ENCODE measurements at regions of chr12 and their contacts with region 1.

Region 1: GRCh38 chr12:94049718-94050117 is 98.7 kb upstream of the PLXNC1 start:
- DNase-seq: no peak
- H3K4me3 ChIP-seq: no peak overlapping the region
- H3K27ac ChIP-seq: no peak overlapping the region
- H3K4me1 ChIP-seq: no peaks in the 10 kb centered on the region
- CTCF ChIP-seq: no peak

Region 2: GRCh38 chr12:93938931-93939330 is 110.8 kb before region 1 on chr12:
- CTCF ChIA-PET with region 1: no interaction called
- POLR2A ChIA-PET with region 1: interaction called, 12 read pairs
- intact Hi-C with region 1: no loop called
- DNase-seq: no peak
- H3K4me3 ChIP-seq: no peak overlapping the region
- H3K27ac ChIP-seq: no peak overlapping the region
- H3K4me1 ChIP-seq: no peaks in the 10 kb centered on the region
- CTCF ChIP-seq: no peak

Region 3: GRCh38 chr12:94001691-94002090 is 48.0 kb before region 1 on chr12:
- CTCF ChIA-PET with region 1: no interaction called
- POLR2A ChIA-PET with region 1: no interaction called
- intact Hi-C with region 1: no loop called
- DNase-seq: no peak
- H3K4me3 ChIP-seq: no peak overlapping the region
- H3K27ac ChIP-seq: no peak overlapping the region
- H3K4me1 ChIP-seq: no peaks in the 10 kb centered on the region
- CTCF ChIP-seq: no peak

Measured in OCI-LY7 (cell line).